ENCODE measurements at regions of chr6 and their contacts with region 1.

Region 1: DNA sequence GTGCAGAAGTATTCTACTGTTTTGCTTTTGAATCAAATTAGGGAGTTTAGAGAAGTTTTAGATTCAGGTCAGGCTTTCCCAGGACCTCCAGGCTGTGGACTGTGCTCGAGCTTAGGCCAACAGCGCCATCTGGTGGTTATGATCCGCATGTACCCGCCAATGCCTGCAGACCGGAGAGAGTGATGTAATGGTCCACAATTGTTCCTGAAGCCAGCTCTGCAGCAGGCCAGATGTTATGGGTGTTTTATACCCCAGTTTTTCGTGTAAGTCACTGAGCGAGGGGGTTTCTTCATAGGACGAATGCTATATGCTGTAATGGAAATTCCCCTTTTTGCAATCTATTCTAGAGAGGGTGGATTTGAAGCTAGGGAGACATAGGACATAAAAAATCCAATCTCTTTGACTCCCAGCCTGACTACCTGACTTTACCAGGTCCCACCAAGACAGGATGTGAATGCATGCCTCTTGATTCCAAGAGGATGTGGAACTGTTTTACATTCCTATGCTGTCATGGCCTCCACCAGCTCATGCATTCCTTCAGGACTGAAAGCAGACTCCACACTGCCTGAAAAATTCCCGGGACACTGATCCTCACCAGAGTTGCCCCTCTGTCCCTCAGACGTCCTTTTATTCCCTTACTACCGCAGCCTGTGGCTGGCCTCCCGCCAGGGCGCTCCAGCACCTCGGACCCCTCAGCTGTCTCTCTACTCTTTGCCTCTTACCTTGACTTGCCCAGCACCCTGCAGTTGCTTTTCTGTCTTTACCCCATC is 41.2 kb upstream of the LY86 start:
- DNase-seq: peak; percentile 87
- H3K4me3 Mint-ChIP-seq: peak overlapping the region; percentile 47
- H3K27ac Mint-ChIP-seq: no peak overlapping the region
- H3K4me1 Mint-ChIP-seq: peaks cover 14% of the 10 kb centered on the region
- H3K27me3 Mint-ChIP-seq: peaks cover 85% of the 10 kb centered on the region

Region 2: DNA sequence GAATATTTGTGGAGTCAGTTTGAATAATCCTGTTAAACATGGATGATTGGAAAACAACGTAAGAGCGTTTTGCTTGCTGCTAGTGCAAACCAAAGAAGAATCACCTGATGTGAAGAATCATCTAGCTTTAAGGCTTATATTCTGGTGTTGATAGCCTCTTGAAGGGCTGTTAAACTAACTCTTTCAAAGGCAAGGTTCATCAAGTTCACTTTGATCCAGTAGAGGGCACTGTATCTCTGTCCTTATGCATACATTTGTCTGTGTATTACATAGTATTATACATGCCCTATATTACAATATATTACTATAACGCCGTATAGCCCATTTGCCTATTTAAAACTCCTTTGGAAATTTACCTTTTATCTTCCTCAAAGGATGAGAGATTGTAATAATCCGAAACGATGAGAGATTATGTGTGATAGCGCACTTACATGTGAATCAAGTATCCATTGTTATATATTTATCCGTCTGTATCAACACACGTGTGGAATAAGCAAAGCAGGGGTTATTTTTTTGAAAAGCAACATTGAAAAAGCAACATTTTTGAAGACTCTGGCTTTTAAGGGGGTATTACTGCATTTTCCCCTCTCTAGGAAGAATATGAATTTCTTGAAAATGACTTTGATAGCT is 489.8 kb before region 1 on chr6:
- CTCF ChIA-PET with region 1: interaction called, 36 read pairs
- DNase-seq: no peak
- H3K4me3 Mint-ChIP-seq: no peak overlapping the region
- H3K27ac Mint-ChIP-seq: no peak overlapping the region
- H3K4me1 Mint-ChIP-seq: no peaks in the 10 kb centered on the region
- H3K27me3 Mint-ChIP-seq: peaks cover 17% of the 10 kb centered on the region

Region 3: GRCh38 chr6:6505111-6505510 is 42.2 kb before region 1 on chr6:
- CTCF ChIA-PET with region 1: no interaction called
- DNase-seq: no peak
- H3K4me3 Mint-ChIP-seq: no peak overlapping the region
- H3K27ac Mint-ChIP-seq: no peak overlapping the region
- H3K4me1 Mint-ChIP-seq: no peaks in the 10 kb centered on the region
- H3K27me3 Mint-ChIP-seq: peaks cover 52% of the 10 kb centered on the region

Measured in activated naive CD4-positive, alpha-beta T cell treated with anti-CD3 and anti-CD28 coated beads, Interleukin-2, amount 10 ng/mL, durations not matched to agents 7 days and 5 days (primary cell).